GM23248 (cell line): ENCODE measurements at regions of chr1 and their contacts with region 1.

Region 1: GRCh38 chr1:92749024-92749634 is 35.8 kb downstream of the EVI5 start:
- DNase-seq: peak; percentile 84
- H3K4me3 ChIP-seq: no peak overlapping the region
- H3K27ac ChIP-seq: no peak overlapping the region
- H3K4me1 ChIP-seq: peaks cover 20% of the 10 kb centered on the region
- H3K27me3 ChIP-seq: no peaks in the 10 kb centered on the region

Region 2: GRCh38 chr1:92817986-92818764 is 69.0 kb after region 1 on chr1:
- in situ Hi-C with region 1: loop called (anchors 5 kb)
- DNase-seq: peak; percentile 66
- H3K4me3 ChIP-seq: no peak overlapping the region
- H3K27ac ChIP-seq: no peak overlapping the region
- H3K4me1 ChIP-seq: peaks cover 10% of the 10 kb centered on the region; the same call in 1 of the 2 replicates
- H3K27me3 ChIP-seq: no peaks in the 10 kb centered on the region